ENCODE measurements at regions of chr6 and their contacts with region 1.

Region 1: DNA sequence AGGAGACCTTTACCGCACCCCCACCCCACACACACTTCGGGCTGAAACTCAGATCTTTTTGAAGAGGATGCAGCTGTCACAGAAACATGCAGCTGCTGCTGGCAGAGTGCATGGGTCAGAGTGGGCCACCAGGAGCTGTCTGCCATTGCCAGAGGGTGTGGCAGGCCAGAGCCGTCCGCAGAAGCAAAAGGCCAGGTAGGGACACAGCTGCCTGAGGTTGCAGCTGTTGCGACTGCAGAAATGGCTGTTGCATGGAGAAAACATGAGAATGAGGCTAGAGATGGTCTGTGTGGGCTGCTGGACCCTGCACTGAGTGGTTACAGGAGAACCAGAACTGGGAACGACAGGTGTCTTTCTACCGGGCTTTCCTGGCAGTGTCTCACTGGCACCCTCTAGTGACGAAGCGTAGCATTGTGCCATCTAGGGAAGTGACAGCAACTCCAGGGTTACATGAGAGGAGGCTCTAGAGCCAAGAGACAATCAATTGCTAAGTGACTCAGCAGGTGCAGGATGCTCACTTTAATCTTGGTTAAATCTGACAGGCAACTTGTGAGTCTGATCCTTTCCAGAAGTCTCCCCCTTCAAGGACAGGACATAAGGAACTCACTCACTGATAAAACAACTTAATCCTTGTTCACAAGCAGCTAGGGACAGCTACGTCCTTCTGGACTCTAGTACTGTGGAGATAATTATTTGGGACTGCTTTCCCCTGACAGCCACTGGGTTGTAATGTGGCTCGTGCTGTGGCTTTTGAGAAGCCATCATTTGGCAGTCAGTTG is 29.1 kb upstream of the SERPINB9 start:
- DNase-seq: peak; percentile 81
- H3K4me3 ChIP-seq: no peak overlapping the region
- H3K27ac ChIP-seq: no peak overlapping the region
- H3K4me1 ChIP-seq: peaks cover 0 to 8% (median 5%) of the 10 kb centered on the region in 4 donors
- H3K27me3 ChIP-seq: peaks cover 0 to 4% (median 0%) of the 10 kb centered on the region in 3 donors
- CTCF ChIP-seq: peak; percentile 78 to 98 (median 90)
- EP300 ChIP-seq: no peak
- POLR2A ChIP-seq: no peak

Region 2: GRCh38 chr6:2791124-2791974 is 140.8 kb before region 1 on chr6:
- intact Hi-C with region 1: loop called (anchors 1 kb)
- DNase-seq: peak; percentile 83
- H3K4me3 ChIP-seq: peak overlapping the region in 2 of 4 donors; percentile 4 to 16
- H3K27ac ChIP-seq: peak overlapping the region; percentile 76 to 85 (median 81)
- H3K4me1 ChIP-seq: peaks cover 0 to 40% (median 27%) of the 10 kb centered on the region in 4 donors
- H3K27me3 ChIP-seq: no peaks in the 10 kb centered on the region
- CTCF ChIP-seq: peak; percentile 61 to 82 (median 70)
- EP300 ChIP-seq: no peak
- POLR2A ChIP-seq: no peak

Region 3: DNA sequence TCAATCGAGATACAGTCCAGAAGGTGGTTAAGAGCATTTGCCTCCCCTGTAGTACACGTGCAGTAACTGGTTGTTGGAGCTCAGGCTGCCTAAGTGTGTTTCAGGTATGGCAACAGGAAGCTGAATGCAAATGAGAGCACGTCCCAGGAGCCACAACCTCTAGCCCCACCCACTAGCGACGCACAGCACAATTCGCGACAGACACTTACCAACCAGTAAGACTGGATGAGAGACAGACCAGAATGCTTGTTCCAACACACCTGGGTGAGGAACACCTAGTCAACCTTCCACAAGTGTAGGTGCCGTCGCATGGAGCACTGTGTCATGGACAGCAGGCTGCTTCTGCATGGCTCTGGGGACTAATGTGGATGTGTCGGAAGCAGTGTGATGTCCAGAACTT is 83.3 kb before region 1 on chr6:
- intact Hi-C with region 1: loop called (anchors 2 kb)
- DNase-seq: no peak
- H3K4me3 ChIP-seq: no peak overlapping the region
- H3K27ac ChIP-seq: no peak overlapping the region
- H3K4me1 ChIP-seq: peaks cover 0 to 13% (median 7%) of the 10 kb centered on the region in 4 donors
- H3K27me3 ChIP-seq: no peaks in the 10 kb centered on the region
- CTCF ChIP-seq: no peak
- EP300 ChIP-seq: no peak
- POLR2A ChIP-seq: no peak

Region 4: GRCh38 chr6:3075522-3076113 is 143.5 kb after region 1 on chr6:
- intact Hi-C with region 1: no loop called
- DNase-seq: no peak
- H3K4me3 ChIP-seq: no peak overlapping the region
- H3K27ac ChIP-seq: no peak overlapping the region
- H3K4me1 ChIP-seq: peaks cover 0 to 28% (median 19%) of the 10 kb centered on the region in 4 donors
- H3K27me3 ChIP-seq: no peaks in the 10 kb centered on the region
- CTCF ChIP-seq: no peak
- EP300 ChIP-seq: no peak
- POLR2A ChIP-seq: no peak